HCT116 (cell line): ENCODE measurements at regions of chr3 and their contacts with region 1.

Region 1: DNA sequence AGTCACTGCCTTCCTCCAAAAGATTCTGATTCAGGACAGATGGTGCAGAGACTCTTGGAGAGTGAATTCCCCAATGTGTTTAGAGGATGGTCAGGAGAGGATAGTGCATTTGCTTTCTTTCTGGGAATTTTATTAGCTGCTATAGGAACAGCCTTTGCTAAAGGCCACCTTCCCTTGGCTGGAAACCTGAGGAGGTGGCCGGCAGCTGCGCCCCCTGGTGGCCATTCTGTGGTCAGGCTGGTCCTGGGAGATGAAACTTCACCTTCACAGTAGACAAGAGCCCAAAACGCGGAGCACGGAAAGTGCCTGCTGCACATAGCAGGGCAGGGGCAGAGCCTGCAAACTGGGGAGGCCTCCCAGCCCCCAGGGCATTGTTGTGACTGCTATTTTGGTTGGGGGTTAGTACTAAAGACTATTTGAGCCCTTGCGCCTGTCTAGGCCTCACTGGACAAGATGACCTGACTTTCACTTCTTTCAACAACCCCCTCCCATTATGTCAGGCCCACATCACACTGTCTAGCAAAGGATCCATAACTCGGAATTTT is 34.3 kb downstream of the SEC22C start:
- DNase-seq: peak; percentile 31
- ATAC-seq: peak; percentile 96
- H3K4me3 ChIP-seq: no peak overlapping the region
- H3K27ac ChIP-seq: no peak overlapping the region
- H3K4me1 ChIP-seq: no peaks in the 10 kb centered on the region
- H3K27me3 ChIP-seq: no peaks in the 10 kb centered on the region
- CTCF ChIP-seq: peak; percentile 69 to 99 (median 98); a peak in 5 of 6 replicates
- POLR2A ChIP-seq: no peak
- RAD21 ChIP-seq: peak; percentile 57

Region 2: GRCh38 chr3:42118762-42119361 is 428.6 kb before region 1 on chr3:
- CTCF ChIA-PET with region 1: no interaction called
- POLR2A ChIA-PET with region 1: no interaction called
- RAD21 ChIA-PET with region 1: no interaction called
- intact Hi-C with region 1: loop called (anchors 5 kb)
- DNase-seq: peak; percentile 47
- ATAC-seq: peak; percentile 86
- H3K4me3 ChIP-seq: no peak overlapping the region
- H3K27ac ChIP-seq: no peak overlapping the region
- H3K4me1 ChIP-seq: peaks cover 40 to 51% of the 10 kb centered on the region in 2 experiments
- H3K27me3 ChIP-seq: no peaks in the 10 kb centered on the region
- CTCF ChIP-seq: peak; percentile 66 to 79 (median 67); a peak in 5 of 6 replicates
- POLR2A ChIP-seq: no peak
- RAD21 ChIP-seq: peak; percentile 84

Region 3: GRCh38 chr3:42247576-42248027 is 299.9 kb before region 1 on chr3:
- CTCF ChIA-PET with region 1: interaction called, 14 read pairs
- POLR2A ChIA-PET with region 1: no interaction called
- RAD21 ChIA-PET with region 1: no interaction called
- intact Hi-C with region 1: loop called (anchors 1 kb)
- DNase-seq: peak; percentile 60
- ATAC-seq: peak; percentile 88
- H3K4me3 ChIP-seq: no peak overlapping the region
- H3K27ac ChIP-seq: no peak overlapping the region
- H3K4me1 ChIP-seq: peaks cover 0 to 5% of the 10 kb centered on the region in 2 experiments; a peak in 1 of 4 replicates
- H3K27me3 ChIP-seq: peaks cover 8% of the 10 kb centered on the region; the same call in 1 of the 2 replicates
- CTCF ChIP-seq: peak; percentile 63 to 93 (median 88)
- POLR2A ChIP-seq: no peak
- RAD21 ChIP-seq: peak; percentile 95

Region 4: DNA sequence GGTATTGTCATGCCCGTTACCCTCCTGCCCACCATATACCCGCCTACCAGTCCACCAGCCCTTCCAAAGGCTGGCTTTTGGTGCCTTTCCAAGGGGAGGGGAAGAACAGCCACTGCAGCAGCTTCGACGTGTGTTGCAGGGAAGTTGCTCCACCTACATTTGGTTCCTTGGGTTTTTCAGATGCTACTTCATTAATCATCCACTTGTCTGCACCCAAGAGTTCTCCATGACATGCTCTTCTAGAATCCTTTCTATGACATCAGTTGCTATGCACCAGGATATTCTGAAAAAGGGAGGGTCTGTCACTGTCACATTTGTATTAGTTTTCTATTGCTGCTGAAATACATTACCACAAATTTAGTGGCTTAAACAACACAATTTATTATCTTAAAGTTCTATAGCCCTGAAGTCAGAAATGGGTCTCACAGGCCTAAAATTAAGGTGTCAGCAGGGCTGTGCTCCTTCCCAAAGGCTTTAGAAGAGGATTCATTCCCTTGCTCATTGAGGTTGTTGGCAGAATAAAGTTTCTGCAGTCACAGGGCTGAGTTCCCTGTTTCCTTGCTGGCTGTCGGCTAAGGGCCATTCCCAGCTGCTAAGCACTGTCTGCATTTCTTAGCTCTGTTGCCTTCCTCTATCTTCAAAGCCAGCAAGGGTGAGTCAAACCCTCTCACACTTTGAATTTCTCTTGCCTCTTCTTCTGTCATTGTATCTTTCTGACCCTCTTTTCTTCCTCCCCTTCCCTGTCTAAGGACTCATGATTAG is 136.9 kb before region 1 on chr3 and contains the start of gene LYZL4:
- CTCF ChIA-PET with region 1: no interaction called
- POLR2A ChIA-PET with region 1: no interaction called
- RAD21 ChIA-PET with region 1: no interaction called
- intact Hi-C with region 1: no loop called
- DNase-seq: no peak
- ATAC-seq: no peak
- H3K4me3 ChIP-seq: no peak within 1 kb of the TSS
- H3K27ac ChIP-seq: no peak within 1 kb of the TSS
- H3K4me1 ChIP-seq: no peaks in the 10 kb centered on the region; a peak in 1 of 4 replicates
- H3K27me3 ChIP-seq: peaks cover 2% of the 10 kb centered on the region; the same call in 1 of the 2 replicates
- CTCF ChIP-seq: no peak
- POLR2A ChIP-seq: no peak
- RAD21 ChIP-seq: no peak
- total RNA-seq, gene LYZL4: not detected

Region 5: DNA sequence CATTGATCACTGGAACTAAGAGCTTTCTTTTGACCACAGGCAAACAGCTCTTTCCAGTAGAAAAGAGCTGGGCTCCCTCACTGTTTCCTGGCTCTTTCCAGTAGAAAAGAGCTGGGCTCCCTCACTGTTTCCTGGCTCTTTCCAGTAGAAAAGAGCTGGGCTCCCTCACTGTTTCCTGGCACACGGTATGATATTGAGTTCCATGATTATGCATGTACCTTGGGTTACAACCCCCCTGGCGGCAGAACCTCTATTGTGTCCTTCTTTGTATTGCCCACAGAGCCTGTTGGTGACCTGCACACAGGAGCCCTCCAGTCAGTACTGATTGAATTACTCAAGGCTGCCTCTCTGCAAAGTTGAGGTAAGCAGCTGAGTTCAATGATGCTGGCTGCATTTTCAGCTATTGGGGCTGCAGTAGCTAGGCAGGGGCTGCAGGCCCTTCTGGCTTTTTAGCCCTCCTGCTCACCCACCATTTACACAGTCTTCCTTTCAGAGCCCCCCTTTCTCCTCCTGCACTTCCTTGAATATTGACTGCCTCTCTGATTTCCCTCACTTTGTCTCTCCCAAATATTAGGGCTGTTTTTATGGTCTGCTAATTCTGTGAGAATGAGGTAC is 272.0 kb after region 1 on chr3:
- CTCF ChIA-PET with region 1: interaction called, 3 read pairs
- POLR2A ChIA-PET with region 1: no interaction called
- RAD21 ChIA-PET with region 1: no interaction called
- intact Hi-C with region 1: loop called (anchors 10 kb)
- DNase-seq: no peak
- ATAC-seq: peak; percentile 78
- H3K4me3 ChIP-seq: no peak overlapping the region
- H3K27ac ChIP-seq: no peak overlapping the region
- H3K4me1 ChIP-seq: peaks cover 2 to 15% of the 10 kb centered on the region in 2 experiments; a peak in 2 of 4 replicates
- H3K27me3 ChIP-seq: no peaks in the 10 kb centered on the region
- CTCF ChIP-seq: peak in 1 of 3 experiments; percentile 7; a peak in 1 of 6 replicates
- POLR2A ChIP-seq: no peak
- RAD21 ChIP-seq: no peak